HAP-1 (cell line): ENCODE measurements at regions of chr6 and their contacts with region 1.

Region 1: DNA sequence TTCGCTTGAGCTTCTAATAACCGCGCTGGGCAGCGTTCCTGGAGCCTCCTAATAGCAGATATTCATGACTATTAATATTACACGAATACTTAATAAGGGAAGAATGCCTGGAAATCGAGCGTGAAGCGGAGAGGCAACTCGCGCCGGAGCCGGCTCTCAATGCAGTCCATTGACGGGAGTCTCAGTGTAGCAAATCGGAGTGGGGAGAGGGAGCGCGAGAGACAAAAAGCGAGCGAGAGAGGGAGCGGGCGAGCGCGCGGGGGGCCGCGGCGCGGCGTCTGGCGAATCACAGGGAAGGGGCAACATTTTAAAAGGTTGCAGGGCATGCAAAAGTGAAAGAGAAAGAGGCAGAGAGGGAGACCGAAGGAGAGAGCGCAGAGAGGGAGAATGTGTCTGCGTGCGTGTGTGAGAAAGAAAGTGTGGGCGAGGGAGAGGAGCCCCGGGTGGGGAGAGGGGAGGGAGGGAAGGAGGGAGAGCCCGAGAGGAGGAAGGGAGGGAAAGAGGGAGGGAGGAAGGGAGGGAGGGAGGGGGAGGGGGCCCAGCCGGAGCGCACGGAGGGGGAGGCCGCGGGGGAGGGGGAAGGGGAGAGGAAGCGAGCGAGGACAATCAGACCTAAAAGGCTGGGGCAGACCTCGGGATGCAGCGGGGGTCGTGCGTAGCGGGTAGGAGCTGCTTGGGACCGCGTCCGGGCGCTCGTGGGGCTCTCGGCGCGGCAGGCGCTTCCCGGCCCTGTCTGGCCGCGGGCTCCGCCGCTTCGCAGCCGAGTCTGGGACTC is 2.7 kb downstream of the TFAP2A start:
- DNase-seq: peak; percentile 78 to 84
- H3K4me3 ChIP-seq: peak overlapping the region; percentile 43
- H3K4me1 ChIP-seq: peaks cover 16% of the 10 kb centered on the region
- H3K27me3 ChIP-seq: no peaks in the 10 kb centered on the region

Region 2: DNA sequence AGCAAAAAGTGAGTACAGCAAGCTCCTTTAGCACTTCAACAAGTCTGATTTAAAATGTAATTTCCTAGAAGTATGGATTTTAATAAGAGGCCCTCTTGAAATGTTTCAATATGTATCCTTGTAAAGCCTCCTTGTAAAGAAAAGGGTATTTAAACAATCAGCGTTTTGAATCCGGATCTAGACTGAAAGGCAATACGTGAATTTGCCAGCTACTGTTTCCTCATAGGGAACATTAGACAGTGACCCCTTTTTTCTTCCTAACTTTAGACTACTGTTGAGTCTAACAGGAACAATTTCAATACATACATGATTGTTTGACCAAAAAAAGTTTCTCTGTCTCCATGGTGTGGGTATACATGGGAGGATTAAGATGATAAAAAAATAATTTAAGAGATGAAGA is 392.3 kb before region 1 on chr6:
- in situ Hi-C with region 1: loop called (anchors 10 kb)
- DNase-seq: no peak
- H3K4me3 ChIP-seq: no peak overlapping the region
- H3K4me1 ChIP-seq: no peaks in the 10 kb centered on the region
- H3K27me3 ChIP-seq: no peaks in the 10 kb centered on the region

Region 3: DNA sequence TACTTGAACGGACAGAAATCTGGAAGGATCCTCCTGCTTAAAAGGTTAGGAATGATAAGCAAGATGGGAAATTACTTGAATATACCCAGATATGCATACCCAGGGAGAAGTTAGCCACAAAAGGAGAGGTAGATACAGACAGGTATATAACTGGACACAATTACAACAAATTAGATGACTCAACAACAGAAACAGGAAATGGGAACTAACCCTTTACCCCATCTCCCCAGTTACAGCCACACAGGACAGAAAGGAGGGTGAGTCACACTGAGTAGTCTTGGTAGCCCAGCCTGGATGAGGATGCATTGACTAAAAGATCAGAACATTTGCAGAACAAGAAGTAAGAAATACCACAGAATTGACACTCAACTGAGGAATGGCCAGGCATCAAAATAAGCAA is 221.1 kb after region 1 on chr6:
- in situ Hi-C with region 1: no loop called
- DNase-seq: no peak
- H3K4me3 ChIP-seq: no peak overlapping the region
- H3K4me1 ChIP-seq: no peaks in the 10 kb centered on the region
- H3K27me3 ChIP-seq: no peaks in the 10 kb centered on the region